B cell (primary cell): ENCODE measurements at regions of chr20 and their contacts with region 1.

Region 1: DNA sequence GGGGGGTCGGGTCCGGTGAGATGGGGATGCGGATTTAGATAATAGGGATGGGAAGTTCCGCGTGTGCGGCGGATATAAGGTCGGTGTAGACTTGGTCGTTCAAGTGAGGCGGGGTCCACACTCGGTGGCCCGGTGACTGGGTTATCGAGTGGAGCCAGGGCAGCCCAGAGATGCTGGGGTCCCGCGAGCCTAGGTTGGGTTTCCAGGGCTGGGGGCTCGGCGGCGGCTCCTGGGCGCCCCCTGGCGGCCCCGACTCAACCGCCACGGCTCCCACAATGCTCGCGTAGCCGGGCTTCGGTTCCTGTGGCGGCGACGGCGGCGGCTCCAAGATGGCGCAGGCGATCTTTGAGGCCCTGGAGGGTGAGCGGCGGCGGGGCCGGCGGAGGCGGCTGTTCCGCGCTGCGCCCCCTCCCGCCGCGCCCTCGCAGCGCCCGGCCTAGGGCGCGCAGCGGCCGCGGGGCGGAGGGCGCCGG is at the start of gene ZNF341:
- DNase-seq: no peak
- ATAC-seq: peak; percentile 74
- H3K4me3 ChIP-seq: peak within 1 kb of the TSS; percentile 63 to 84 (median 68)
- H3K4me3 Mint-ChIP-seq: peak within 1 kb of the TSS; percentile 98
- H3K27ac ChIP-seq: peak within 1 kb of the TSS; percentile 61 to 81
- H3K27ac Mint-ChIP-seq: peak within 1 kb of the TSS; percentile 96
- H3K4me1 ChIP-seq: peaks cover 20 to 29% of the 10 kb centered on the region in 2 donors
- H3K4me1 Mint-ChIP-seq: peaks cover 24% of the 10 kb centered on the region
- H3K27me3 ChIP-seq: no peaks in the 10 kb centered on the region
- H3K27me3 Mint-ChIP-seq: no peaks in the 10 kb centered on the region
- CTCF ChIP-seq: peak; percentile 84
- total RNA-seq, gene ZNF341: 9.1 and 9.9 TPM in 2 replicates

Region 2: DNA sequence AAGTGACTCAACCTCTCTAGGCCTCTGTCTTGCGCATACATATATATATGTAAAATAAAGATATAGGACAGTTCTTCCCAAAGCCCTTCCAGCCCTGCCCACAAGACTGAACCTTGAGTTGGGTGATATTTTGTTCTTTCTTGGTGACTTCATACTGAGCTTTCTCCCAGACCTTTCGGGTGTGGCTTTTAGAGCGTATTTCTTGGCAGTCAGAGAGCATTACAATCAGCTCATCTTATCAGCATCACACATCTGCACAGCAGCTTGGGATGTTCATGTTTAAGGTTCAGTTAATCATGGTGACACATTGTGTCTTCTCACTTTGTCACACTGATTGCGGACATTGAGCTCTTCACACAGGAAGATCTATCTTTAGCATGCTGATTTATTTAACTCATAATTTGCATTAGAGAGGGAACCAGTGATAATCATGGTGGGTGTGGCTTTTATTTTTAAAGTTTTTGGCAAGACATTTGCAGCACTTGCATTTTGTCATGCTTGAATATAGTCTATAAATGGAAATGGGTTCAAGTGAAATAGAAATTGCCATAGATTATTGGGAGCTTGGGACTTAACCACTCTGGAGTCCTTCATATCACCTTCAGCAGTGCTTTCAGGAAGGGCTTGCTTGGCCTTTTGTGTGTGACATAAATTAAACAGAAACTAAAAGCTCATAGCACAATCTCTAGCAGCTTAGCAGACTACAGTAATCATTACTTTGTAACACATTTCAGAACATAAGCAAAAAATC is 1445.9 kb before region 1 on chr20:
- CTCF ChIA-PET with region 1: no interaction called
- POLR2A ChIA-PET with region 1: no interaction called
- intact Hi-C with region 1: no loop called
- DNase-seq: peak; percentile 67
- ATAC-seq: peak; percentile 86
- H3K4me3 ChIP-seq: peak overlapping the region; percentile 29 to 65 (median 49)
- H3K4me3 Mint-ChIP-seq: peak overlapping the region; percentile 81
- H3K27ac ChIP-seq: peak overlapping the region; percentile 85 to 91
- H3K27ac Mint-ChIP-seq: peak overlapping the region; percentile 94
- H3K4me1 ChIP-seq: peaks cover 70 to 75% of the 10 kb centered on the region in 2 donors
- H3K4me1 Mint-ChIP-seq: peaks cover 82% of the 10 kb centered on the region
- H3K27me3 ChIP-seq: no peaks in the 10 kb centered on the region
- H3K27me3 Mint-ChIP-seq: no peaks in the 10 kb centered on the region
- CTCF ChIP-seq: no peak

Region 3: GRCh38 chr20:33443512-33444239 is 288.1 kb before region 1 on chr20 and contains the start of gene SNTA1:
- CTCF ChIA-PET with region 1: no interaction called
- POLR2A ChIA-PET with region 1: interaction called, 10 read pairs
- intact Hi-C with region 1: loop called (anchors 1 kb)
- DNase-seq: peak; percentile 90
- ATAC-seq: peak; percentile 89
- H3K4me3 ChIP-seq: peak within 1 kb of the TSS; percentile 70 to 87 (median 80)
- H3K4me3 Mint-ChIP-seq: peak within 1 kb of the TSS; percentile 94
- H3K27ac ChIP-seq: peak within 1 kb of the TSS; percentile 51 to 58
- H3K27ac Mint-ChIP-seq: peak within 1 kb of the TSS; percentile 91
- H3K4me1 ChIP-seq: peaks cover 13 to 23% of the 10 kb centered on the region in 2 donors
- H3K4me1 Mint-ChIP-seq: peaks cover 31% of the 10 kb centered on the region
- H3K27me3 ChIP-seq: no peaks in the 10 kb centered on the region
- H3K27me3 Mint-ChIP-seq: no peaks in the 10 kb centered on the region
- CTCF ChIP-seq: no peak
- total RNA-seq, gene SNTA1: 9.9 and 11.5 TPM in 2 replicates

Region 4: GRCh38 chr20:33674295-33675135 is 57.2 kb before region 1 on chr20 and contains the start of gene NECAB3:
- CTCF ChIA-PET with region 1: no interaction called
- POLR2A ChIA-PET with region 1: interaction called, 4 read pairs
- intact Hi-C with region 1: loop called (anchors 2 kb)
- DNase-seq: peak; percentile 71
- ATAC-seq: peak; percentile 94
- H3K4me3 ChIP-seq: peak within 1 kb of the TSS; percentile 36 to 66 (median 51)
- H3K4me3 Mint-ChIP-seq: peak within 1 kb of the TSS; percentile 84
- H3K27ac ChIP-seq: no peak within 1 kb of the TSS
- H3K27ac Mint-ChIP-seq: peak within 1 kb of the TSS; percentile 57
- H3K4me1 ChIP-seq: peaks cover 23 to 28% of the 10 kb centered on the region in 2 donors
- H3K4me1 Mint-ChIP-seq: peaks cover 30% of the 10 kb centered on the region
- H3K27me3 ChIP-seq: no peaks in the 10 kb centered on the region
- H3K27me3 Mint-ChIP-seq: no peaks in the 10 kb centered on the region
- CTCF ChIP-seq: no peak
- total RNA-seq, gene NECAB3: 11.8 and 19.3 TPM in 2 replicates

Region 5: GRCh38 chr20:33719989-33720709 is 11.6 kb before region 1 on chr20 and contains the start of gene PXMP4:
- CTCF ChIA-PET with region 1: interaction called, 8 read pairs
- POLR2A ChIA-PET with region 1: interaction called, 20 read pairs
- intact Hi-C with region 1: loop called (anchors 1 kb)
- DNase-seq: peak; percentile 93
- ATAC-seq: peak; percentile 97
- H3K4me3 ChIP-seq: peak within 1 kb of the TSS; percentile 36 to 90 (median 85)
- H3K4me3 Mint-ChIP-seq: peak within 1 kb of the TSS; percentile 90
- H3K27ac ChIP-seq: peak within 1 kb of the TSS; percentile 43 to 53
- H3K27ac Mint-ChIP-seq: peak within 1 kb of the TSS; percentile 85
- H3K4me1 ChIP-seq: peaks cover 8 to 16% of the 10 kb centered on the region in 2 donors
- H3K4me1 Mint-ChIP-seq: peaks cover 14% of the 10 kb centered on the region
- H3K27me3 ChIP-seq: no peaks in the 10 kb centered on the region
- H3K27me3 Mint-ChIP-seq: no peaks in the 10 kb centered on the region
- CTCF ChIP-seq: no peak
- total RNA-seq, gene PXMP4: 6.6 and 6.8 TPM in 2 replicates

Region 6: DNA sequence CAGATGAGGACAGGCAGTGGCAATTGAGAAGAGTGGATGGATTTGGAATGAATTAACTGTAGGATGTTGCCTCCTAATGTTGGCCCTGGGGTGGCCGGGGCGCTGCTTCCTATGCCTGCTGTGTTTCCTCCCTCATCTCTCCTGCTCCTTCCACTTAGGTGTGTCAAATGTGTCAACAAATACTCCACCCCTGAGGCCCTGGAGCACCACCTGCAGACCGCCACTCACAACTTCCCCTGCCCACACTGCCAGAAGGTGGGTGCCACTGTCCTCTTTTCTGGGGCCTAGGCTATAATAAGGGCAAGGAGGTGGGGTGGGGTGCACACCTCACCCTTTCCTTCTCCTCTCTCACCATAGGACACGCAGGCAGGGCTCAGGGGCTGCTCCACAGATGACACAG is 49.4 kb after region 1 on chr20:
- CTCF ChIA-PET with region 1: interaction called, 10 read pairs
- POLR2A ChIA-PET with region 1: interaction called, 31 read pairs
- intact Hi-C with region 1: loop called (anchors 1 kb)
- DNase-seq: no peak
- ATAC-seq: no peak
- H3K4me3 ChIP-seq: no peak overlapping the region
- H3K4me3 Mint-ChIP-seq: peak overlapping the region; percentile 42
- H3K27ac ChIP-seq: peak overlapping the region; percentile 95 to 97
- H3K27ac Mint-ChIP-seq: peak overlapping the region; percentile 93
- H3K4me1 ChIP-seq: peaks cover 75 to 93% of the 10 kb centered on the region in 2 donors
- H3K4me1 Mint-ChIP-seq: peaks cover 74% of the 10 kb centered on the region
- H3K27me3 ChIP-seq: no peaks in the 10 kb centered on the region
- H3K27me3 Mint-ChIP-seq: no peaks in the 10 kb centered on the region
- CTCF ChIP-seq: no peak

Region 7: GRCh38 chr20:34111702-34112599 is 380.2 kb after region 1 on chr20 and contains the start of gene EIF2S2:
- CTCF ChIA-PET with region 1: interaction called, 3 read pairs
- POLR2A ChIA-PET with region 1: interaction called, 5 read pairs
- intact Hi-C with region 1: loop called (anchors 1 kb)
- DNase-seq: peak; percentile 99
- ATAC-seq: peak; percentile 91
- H3K4me3 ChIP-seq: peak within 1 kb of the TSS; percentile 63 to 97 (median 90)
- H3K4me3 Mint-ChIP-seq: peak within 1 kb of the TSS; percentile 99
- H3K27ac ChIP-seq: peak within 1 kb of the TSS; percentile 80 to 95
- H3K27ac Mint-ChIP-seq: peak within 1 kb of the TSS; percentile 99
- H3K4me1 ChIP-seq: peaks cover 21 to 28% of the 10 kb centered on the region in 2 donors
- H3K4me1 Mint-ChIP-seq: peaks cover 45% of the 10 kb centered on the region
- H3K27me3 ChIP-seq: no peaks in the 10 kb centered on the region
- H3K27me3 Mint-ChIP-seq: no peaks in the 10 kb centered on the region
- CTCF ChIP-seq: no peak
- total RNA-seq, gene EIF2S2: 26.4 and 27.7 TPM in 2 replicates